Common myeloid progenitor, CD34-positive (primary cell): ENCODE measurements at regions of chr14 and their contacts with region 1.

Region 1: GRCh38 chr14:68862954-68863594 is 70.2 kb upstream of the ZFP36L1 start:
- DNase-seq: peak; percentile 75 to 86 (median 84)
- H3K4me3 ChIP-seq: no peak overlapping the region
- H3K27ac ChIP-seq: no peak overlapping the region
- H3K4me1 ChIP-seq: no peaks in the 10 kb centered on the region
- H3K27me3 ChIP-seq: no peaks in the 10 kb centered on the region

Region 2: DNA sequence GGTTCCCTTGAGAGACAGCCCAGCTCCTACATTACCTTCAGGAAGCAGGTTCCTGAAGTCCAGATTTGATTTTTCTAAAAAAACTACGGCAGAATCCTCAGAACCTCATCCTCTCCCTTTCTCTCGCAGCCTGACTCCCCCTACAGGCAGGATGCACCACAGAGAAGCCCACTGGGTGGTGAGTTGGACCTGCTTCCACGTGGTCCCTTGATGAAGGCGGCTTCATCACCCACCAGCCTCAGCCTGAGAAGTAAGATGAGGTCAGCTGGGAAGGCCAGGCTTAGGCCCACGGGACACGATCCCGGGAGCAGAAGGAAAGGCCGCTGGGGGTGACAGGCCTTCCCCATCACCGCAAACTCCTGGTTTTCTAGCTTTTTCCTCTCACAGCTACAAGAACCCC is 33.1 kb after region 1 on chr14:
- CTCF ChIA-PET with region 1: interaction called, 10 read pairs
- POLR2A ChIA-PET with region 1: no interaction called
- DNase-seq: no peak
- H3K4me3 ChIP-seq: no peak overlapping the region
- H3K27ac ChIP-seq: no peak overlapping the region
- H3K4me1 ChIP-seq: peaks cover 0 to 41% (median 36%) of the 10 kb centered on the region in 4 experiments
- H3K27me3 ChIP-seq: no peaks in the 10 kb centered on the region

Region 3: DNA sequence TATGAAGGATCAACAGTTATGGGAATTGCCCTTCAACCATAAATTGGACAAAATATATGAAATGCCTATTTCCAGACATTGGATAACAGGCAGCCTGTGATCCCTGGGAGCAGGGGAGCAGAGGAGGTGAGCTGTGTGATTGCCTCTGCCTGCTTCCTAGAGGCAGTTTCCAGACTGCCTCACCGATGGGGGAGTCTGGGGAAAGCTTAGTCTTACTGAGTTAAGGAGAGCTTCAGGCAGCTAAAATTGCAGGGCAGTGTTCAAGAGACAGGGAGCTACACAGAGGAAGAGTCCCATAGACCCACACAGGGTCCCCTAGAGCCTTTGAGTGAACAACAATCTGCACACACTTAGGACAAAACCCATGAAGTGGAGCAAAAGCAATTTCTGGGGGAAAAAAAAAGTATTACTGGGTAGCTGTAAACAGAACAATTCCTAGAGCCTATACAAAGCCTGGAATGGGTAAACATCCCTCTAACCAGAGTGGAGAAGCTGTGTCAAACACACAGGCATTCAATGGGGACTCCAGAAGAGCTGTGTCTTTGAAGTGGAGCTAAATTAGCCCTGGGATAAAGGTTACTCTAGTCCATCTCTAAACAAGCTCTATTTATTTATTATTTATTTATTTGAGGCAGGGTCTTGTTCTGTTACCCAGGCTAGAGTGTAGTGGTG is 164.3 kb after region 1 on chr14:
- CTCF ChIA-PET with region 1: no interaction called
- POLR2A ChIA-PET with region 1: no interaction called
- DNase-seq: no peak
- H3K4me3 ChIP-seq: no peak overlapping the region
- H3K27ac ChIP-seq: no peak overlapping the region
- H3K4me1 ChIP-seq: no peaks in the 10 kb centered on the region
- H3K27me3 ChIP-seq: no peaks in the 10 kb centered on the region

Region 4: GRCh38 chr14:69101331-69101826 is 238.3 kb after region 1 on chr14:
- CTCF ChIA-PET with region 1: interaction called, 48 read pairs
- POLR2A ChIA-PET with region 1: no interaction called
- DNase-seq: peak; percentile 34 to 67 (median 64)
- H3K4me3 ChIP-seq: no peak overlapping the region
- H3K27ac ChIP-seq: peak overlapping the region in 1 of 2 experiments; percentile 0
- H3K4me1 ChIP-seq: no peaks in the 10 kb centered on the region
- H3K27me3 ChIP-seq: no peaks in the 10 kb centered on the region

Region 5: DNA sequence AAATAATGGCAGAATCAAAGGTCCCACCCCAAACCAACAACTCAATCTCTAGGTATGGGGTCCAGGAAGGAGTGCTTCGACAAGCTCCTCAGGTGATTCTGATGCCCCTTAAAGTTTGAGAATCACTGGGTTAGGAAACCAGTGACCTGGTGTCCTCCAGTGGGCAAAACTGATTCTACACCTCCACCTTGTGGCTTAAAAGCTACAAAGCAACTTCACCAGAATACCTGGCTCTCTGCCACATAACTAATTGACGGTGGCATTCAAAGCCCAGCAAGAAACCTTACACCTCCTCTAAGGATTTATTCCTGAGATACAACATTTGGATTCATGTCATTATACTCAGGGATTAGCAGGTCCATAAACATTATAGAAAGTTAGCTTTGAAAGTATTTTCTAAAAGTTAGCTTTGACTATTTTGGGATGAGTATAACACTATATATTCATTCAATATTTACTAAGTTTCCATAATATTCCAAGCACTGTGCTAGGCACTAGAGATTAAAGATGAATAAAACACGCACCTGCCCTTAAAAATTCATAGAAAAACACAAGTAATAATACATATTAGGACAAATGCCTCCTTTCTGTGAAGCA is 244.4 kb after region 1 on chr14:
- CTCF ChIA-PET with region 1: interaction called, 48 read pairs
- POLR2A ChIA-PET with region 1: no interaction called
- DNase-seq: peak; percentile 64 to 80 (median 73)
- H3K4me3 ChIP-seq: no peak overlapping the region
- H3K27ac ChIP-seq: no peak overlapping the region
- H3K4me1 ChIP-seq: no peaks in the 10 kb centered on the region
- H3K27me3 ChIP-seq: no peaks in the 10 kb centered on the region